MCF 10A (cell line): ENCODE measurements at regions of chr3 and their contacts with region 1.

Region 1: DNA sequence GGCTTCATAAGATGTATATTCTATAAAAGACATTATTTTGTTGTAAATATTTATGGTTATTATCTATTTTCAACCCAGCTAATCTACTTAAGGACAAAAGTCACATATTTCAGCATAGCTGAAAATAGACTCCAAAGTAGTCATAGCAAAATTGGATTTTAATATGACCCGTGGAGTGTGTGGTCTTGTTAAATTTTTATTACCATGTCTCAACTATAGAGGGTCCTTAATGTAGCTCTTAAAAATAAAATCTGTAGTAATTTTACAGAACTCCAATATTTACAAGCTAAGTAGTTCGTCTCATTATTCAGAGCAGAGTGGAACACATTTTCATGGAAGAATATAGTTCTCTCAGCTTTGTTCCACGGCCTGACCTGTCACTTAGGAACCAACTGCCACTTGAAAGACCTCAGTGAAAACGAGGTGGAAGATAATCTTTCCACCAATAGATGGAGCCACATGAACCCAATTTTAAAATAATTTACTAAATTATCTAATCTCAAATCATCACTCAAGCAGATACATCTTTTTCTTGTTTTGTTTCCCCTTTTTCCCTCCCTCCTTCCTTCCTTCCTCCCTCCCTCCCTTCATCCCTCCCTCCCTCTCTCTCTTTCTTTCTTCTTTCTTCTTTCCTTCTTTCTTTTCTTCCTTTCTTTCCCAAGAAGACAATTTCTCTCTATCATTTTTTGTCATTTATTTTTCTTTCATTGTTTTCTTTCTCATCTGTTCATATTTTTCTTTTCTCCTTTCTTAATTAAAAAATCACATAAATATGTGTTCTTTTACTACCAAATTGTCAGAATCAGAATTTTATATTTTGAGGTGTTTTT is 97.2 kb downstream of the CLDN1 start:
- DNase-seq: peak; percentile 57
- H3K4me3 Mint-ChIP-seq: no peak overlapping the region
- H3K27ac Mint-ChIP-seq: no peak overlapping the region
- H3K4me1 Mint-ChIP-seq: peaks cover 16% of the 10 kb centered on the region
- H3K27me3 Mint-ChIP-seq: no peaks in the 10 kb centered on the region
- CTCF ChIP-seq: peak; percentile 50

Region 2: GRCh38 chr3:190142041-190142440 is 83.0 kb before region 1 on chr3:
- CTCF ChIA-PET with region 1: no interaction called
- POLR2A ChIA-PET with region 1: no interaction called
- intact Hi-C with region 1: no loop called
- DNase-seq: no peak
- H3K4me3 Mint-ChIP-seq: no peak overlapping the region
- H3K27ac Mint-ChIP-seq: no peak overlapping the region
- H3K4me1 Mint-ChIP-seq: peaks cover 5% of the 10 kb centered on the region
- H3K27me3 Mint-ChIP-seq: no peaks in the 10 kb centered on the region
- CTCF ChIP-seq: no peak

Region 3: GRCh38 chr3:190265796-190266195 is 40.7 kb after region 1 on chr3:
- CTCF ChIA-PET with region 1: interaction called, 32 read pairs
- POLR2A ChIA-PET with region 1: interaction called, 32 read pairs
- intact Hi-C with region 1: no loop called
- DNase-seq: peak; percentile 97
- H3K4me3 Mint-ChIP-seq: no peak overlapping the region
- H3K27ac Mint-ChIP-seq: peak overlapping the region; percentile 82
- H3K4me1 Mint-ChIP-seq: peaks cover 24% of the 10 kb centered on the region
- H3K27me3 Mint-ChIP-seq: no peaks in the 10 kb centered on the region
- CTCF ChIP-seq: no peak

Region 4: DNA sequence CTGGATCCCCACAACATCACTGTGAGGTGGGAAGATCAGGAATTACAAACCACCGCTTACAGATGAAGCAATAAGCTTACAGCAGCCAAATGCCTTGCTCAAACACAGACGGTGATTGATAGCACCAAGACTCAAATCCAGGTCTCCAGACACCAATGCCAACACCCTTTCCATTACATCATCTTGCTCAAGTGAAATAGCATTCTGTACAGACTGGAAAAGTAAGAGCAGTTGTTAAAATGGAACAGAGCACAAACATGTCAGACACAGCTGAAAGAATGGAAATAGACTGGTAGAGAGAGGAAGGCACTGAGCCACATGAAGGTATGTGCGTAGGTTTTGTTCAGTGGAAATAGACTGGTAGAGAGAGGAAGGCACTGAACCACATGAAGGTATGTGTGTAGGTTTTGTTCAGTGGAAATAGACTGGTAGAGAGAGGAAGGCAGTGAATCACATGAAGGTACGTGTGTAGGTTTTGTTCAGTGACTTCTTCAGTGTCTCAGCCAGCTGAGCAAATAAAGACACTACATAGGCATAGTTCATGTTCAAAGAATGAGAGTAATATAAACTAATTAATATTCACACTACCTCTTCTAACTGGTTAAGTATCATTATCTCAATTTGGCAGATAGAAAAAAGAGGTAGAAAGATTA is 81.6 kb after region 1 on chr3:
- CTCF ChIA-PET with region 1: interaction called, 10 read pairs
- POLR2A ChIA-PET with region 1: interaction called, 24 read pairs
- intact Hi-C with region 1: loop called (anchors 2 kb)
- DNase-seq: peak; percentile 94
- H3K4me3 Mint-ChIP-seq: peak overlapping the region; percentile 0
- H3K27ac Mint-ChIP-seq: peak overlapping the region; percentile 29
- H3K4me1 Mint-ChIP-seq: peaks cover 29% of the 10 kb centered on the region
- H3K27me3 Mint-ChIP-seq: no peaks in the 10 kb centered on the region
- CTCF ChIP-seq: no peak

Region 5: GRCh38 chr3:190345027-190345821 is 120.1 kb after region 1 on chr3:
- CTCF ChIA-PET with region 1: interaction called, 34 read pairs
- POLR2A ChIA-PET with region 1: interaction called, 11 read pairs
- intact Hi-C with region 1: no loop called
- DNase-seq: peak; percentile 94
- H3K4me3 Mint-ChIP-seq: peak overlapping the region; percentile 58
- H3K27ac Mint-ChIP-seq: peak overlapping the region; percentile 99
- H3K4me1 Mint-ChIP-seq: peaks cover 40% of the 10 kb centered on the region
- H3K27me3 Mint-ChIP-seq: no peaks in the 10 kb centered on the region
- CTCF ChIP-seq: no peak

Region 6: GRCh38 chr3:190359813-190360212 is 134.7 kb after region 1 on chr3:
- CTCF ChIA-PET with region 1: no interaction called
- POLR2A ChIA-PET with region 1: no interaction called
- intact Hi-C with region 1: no loop called
- DNase-seq: no peak
- H3K4me3 Mint-ChIP-seq: no peak overlapping the region
- H3K27ac Mint-ChIP-seq: peak overlapping the region; percentile 8
- H3K4me1 Mint-ChIP-seq: peaks cover 22% of the 10 kb centered on the region
- H3K27me3 Mint-ChIP-seq: no peaks in the 10 kb centered on the region
- CTCF ChIP-seq: no peak

Region 7: DNA sequence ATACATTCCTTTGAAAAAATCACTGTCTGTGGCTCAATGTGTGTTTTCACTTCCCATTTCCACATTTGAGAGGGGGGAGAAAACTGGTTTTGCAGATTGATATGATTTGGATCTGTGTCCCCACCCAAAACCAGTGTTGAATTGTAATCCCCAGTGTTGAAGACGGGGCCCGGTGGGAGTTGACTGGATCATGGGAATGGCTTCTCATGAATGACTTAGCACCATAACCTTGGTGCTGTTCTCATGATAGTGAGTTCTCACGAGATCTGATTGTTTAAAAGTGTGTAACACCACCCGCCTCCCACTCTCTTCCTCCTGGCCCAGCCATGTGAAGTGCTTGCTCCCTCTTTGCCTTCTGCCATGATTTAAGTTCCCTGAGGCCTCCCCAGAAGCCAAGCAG is 208.5 kb after region 1 on chr3:
- CTCF ChIA-PET with region 1: no interaction called
- POLR2A ChIA-PET with region 1: no interaction called
- intact Hi-C with region 1: loop called (anchors 1 kb)
- DNase-seq: no peak
- H3K4me3 Mint-ChIP-seq: no peak overlapping the region
- H3K27ac Mint-ChIP-seq: no peak overlapping the region
- H3K4me1 Mint-ChIP-seq: peaks cover 18% of the 10 kb centered on the region
- H3K27me3 Mint-ChIP-seq: no peaks in the 10 kb centered on the region
- CTCF ChIP-seq: no peak

Region 8: GRCh38 chr3:190513409-190514162 is 288.5 kb after region 1 on chr3 and contains the start of gene IL1RAP:
- CTCF ChIA-PET with region 1: interaction called, 3 read pairs
- POLR2A ChIA-PET with region 1: interaction called, 3 read pairs
- intact Hi-C with region 1: loop called (anchors 10 kb)
- DNase-seq: peak; percentile 95
- H3K4me3 Mint-ChIP-seq: peak within 1 kb of the TSS; percentile 88
- H3K27ac Mint-ChIP-seq: peak within 1 kb of the TSS; percentile 78
- H3K4me1 Mint-ChIP-seq: peaks cover 36% of the 10 kb centered on the region
- H3K27me3 Mint-ChIP-seq: no peaks in the 10 kb centered on the region
- CTCF ChIP-seq: peak; percentile 38
- total RNA-seq, gene IL1RAP: 46.5 and 62.0 TPM in 2 replicates